Motor neuron (in vitro differentiated cells): ENCODE measurements at regions of chr6 and their contacts with region 1.

Region 1: GRCh38 chr6:112043032-112044007 is 10.6 kb upstream of the CCN6 start:
- ATAC-seq: peak; percentile 72 to 99 (median 98)
- H3K4me3 ChIP-seq: peak overlapping the region; percentile 42 to 54 (median 48)
- H3K27ac ChIP-seq: peak overlapping the region; percentile 71 to 74
- H3K4me1 ChIP-seq: peaks cover 2 to 5% of the 10 kb centered on the region in 2 donors

Region 2: DNA sequence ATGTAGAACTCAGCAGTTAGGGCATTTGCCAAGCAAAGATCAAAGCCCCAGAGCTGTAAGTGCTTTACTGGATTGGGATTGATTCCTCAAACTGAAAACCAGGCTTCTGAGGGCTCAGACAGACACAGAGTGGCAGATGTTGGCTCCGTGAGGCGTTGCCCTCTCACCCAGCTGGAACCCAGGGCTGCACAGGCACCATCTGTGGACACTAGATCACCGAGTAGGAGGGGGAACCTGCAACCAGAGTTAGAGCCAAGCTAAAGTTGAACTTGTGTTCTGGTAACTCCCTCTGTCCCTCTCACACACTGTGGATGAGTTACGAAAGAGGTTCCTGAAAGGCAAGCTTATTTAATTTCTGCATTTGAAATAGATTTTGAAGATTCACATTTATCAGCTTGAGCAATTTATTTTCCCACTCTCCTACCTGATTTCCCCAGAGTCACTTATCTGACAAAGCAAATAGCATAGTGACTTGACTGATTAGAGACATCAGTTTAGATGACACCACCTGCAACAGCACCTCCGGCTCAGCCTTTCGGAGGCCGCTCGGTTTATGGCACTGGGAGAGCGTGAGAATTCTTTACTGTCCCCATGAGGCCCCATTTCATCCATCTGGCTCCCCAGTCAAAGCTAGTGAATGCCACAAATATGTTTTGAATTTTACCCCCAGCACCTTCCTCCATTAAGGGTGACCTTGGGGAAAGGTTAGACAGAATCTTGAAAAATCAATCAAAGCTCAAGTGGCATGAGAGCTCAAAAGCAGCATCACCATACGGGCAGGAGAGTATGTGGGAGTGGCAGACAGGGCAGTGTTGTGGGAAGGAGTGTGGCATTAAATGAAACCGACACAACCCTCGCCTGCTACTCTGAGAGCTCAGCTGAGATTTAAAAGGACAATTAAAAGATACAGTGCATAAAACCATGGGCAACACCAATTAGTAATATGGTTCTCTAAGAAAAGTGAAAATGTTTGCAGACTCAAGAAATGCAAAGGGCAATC is 1013.0 kb before region 1 on chr6:
- in situ Hi-C with region 1: loop called in 1 of 9 experiments (anchors 25 kb)
- ATAC-seq: peak; percentile 55 to 85 (median 68)
- H3K4me3 ChIP-seq: no peak overlapping the region
- H3K27ac ChIP-seq: peak overlapping the region in 1 of 2 donors; percentile 17
- H3K4me1 ChIP-seq: peaks cover 10 to 17% of the 10 kb centered on the region in 2 donors

Region 3: GRCh38 chr6:111057074-111057752 is 986.1 kb before region 1 on chr6:
- in situ Hi-C with region 1: loop called in 1 of 9 experiments (anchors 25 kb)
- ATAC-seq: peak in 7 of 8 experiments; percentile 36 to 97 (median 73)
- H3K4me3 ChIP-seq: no peak overlapping the region
- H3K27ac ChIP-seq: no peak overlapping the region
- H3K4me1 ChIP-seq: no peaks in the 10 kb centered on the region

Region 4: GRCh38 chr6:111259089-111259831 is 784.1 kb before region 1 on chr6:
- in situ Hi-C with region 1: loop called in 3 of 9 experiments (anchors 25 kb)
- ATAC-seq: peak; percentile 96 to 100 (median 99)
- H3K4me3 ChIP-seq: peak overlapping the region; percentile 52 to 95 (median 78)
- H3K27ac ChIP-seq: peak overlapping the region; percentile 27 to 86
- H3K4me1 ChIP-seq: peaks cover 9 to 10% of the 10 kb centered on the region in 2 donors

Region 5: GRCh38 chr6:111709615-111710398 is 333.5 kb before region 1 on chr6:
- in situ Hi-C with region 1: loop called in 4 of 9 experiments (anchors 5 to 25 kb)
- ATAC-seq: peak; percentile 70 to 98 (median 80)
- H3K4me3 ChIP-seq: no peak overlapping the region
- H3K27ac ChIP-seq: no peak overlapping the region
- H3K4me1 ChIP-seq: peaks cover 16 to 25% of the 10 kb centered on the region in 2 donors

Region 6: GRCh38 chr6:111841822-111842221 is 201.5 kb before region 1 on chr6:
- in situ Hi-C with region 1: no loop called
- ATAC-seq: peak in 1 of 8 experiments; percentile 61
- H3K4me3 ChIP-seq: no peak overlapping the region
- H3K27ac ChIP-seq: peak overlapping the region in 1 of 2 donors; percentile 0
- H3K4me1 ChIP-seq: peaks cover 62 to 68% of the 10 kb centered on the region in 2 donors